ENCODE measurements at regions of chr21 and their contacts with region 1.

Region 1: DNA sequence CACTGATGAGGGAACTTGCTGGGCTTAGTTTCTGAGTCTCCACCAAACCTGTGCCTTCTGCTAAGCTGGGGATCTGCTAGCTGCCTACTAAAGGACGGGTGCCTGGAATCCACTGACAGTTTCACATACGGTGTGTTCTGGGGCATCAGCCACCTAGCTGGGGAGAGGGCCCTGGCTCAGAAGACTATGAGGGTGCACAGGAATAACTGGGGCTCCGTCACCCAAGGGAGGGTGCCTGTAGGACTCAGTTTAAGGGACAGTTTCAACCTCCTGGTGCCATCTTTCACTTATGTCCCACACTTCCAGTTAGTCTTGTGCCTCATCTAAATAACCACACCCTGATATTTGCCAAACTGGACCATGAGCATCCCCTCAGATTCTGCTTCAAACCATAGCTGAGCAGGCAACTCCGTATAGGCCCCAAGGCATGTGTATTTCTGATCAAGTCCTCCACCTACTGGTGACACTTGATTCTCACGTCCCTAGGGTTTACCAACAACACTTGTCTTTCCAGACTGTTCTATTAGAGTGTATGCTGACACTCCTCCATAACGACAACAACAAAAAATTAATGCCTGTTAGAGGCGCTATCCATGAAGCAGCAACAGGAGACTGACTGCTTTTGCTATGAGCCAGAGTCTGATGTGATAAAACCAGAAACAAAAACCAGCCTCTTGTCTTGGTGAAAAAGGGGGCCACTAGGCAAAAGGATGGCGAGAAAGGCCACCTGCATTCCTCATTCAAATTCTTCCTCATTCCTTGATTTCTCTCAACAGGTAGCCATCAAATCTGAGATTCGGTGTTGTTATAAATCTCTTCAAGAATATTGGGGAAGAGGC is 55.0 kb upstream of the PAXBP1 start:
- H3K4me3 Mint-ChIP-seq: no peak overlapping the region
- H3K27ac Mint-ChIP-seq: no peak overlapping the region
- H3K4me1 Mint-ChIP-seq: no peaks in the 10 kb centered on the region
- H3K27me3 Mint-ChIP-seq: peaks cover 3% of the 10 kb centered on the region

Region 2: GRCh38 chr21:32538147-32538792 is 288.3 kb before region 1 on chr21:
- intact Hi-C with region 1: no loop called
- H3K4me3 Mint-ChIP-seq: no peak overlapping the region
- H3K27ac Mint-ChIP-seq: no peak overlapping the region
- H3K4me1 Mint-ChIP-seq: peaks cover 6% of the 10 kb centered on the region
- H3K27me3 Mint-ChIP-seq: no peaks in the 10 kb centered on the region

Region 3: GRCh38 chr21:32653311-32653901 is 173.1 kb before region 1 on chr21:
- intact Hi-C with region 1: loop called (anchors 5 kb)
- H3K4me3 Mint-ChIP-seq: no peak overlapping the region
- H3K27ac Mint-ChIP-seq: no peak overlapping the region
- H3K4me1 Mint-ChIP-seq: no peaks in the 10 kb centered on the region
- H3K27me3 Mint-ChIP-seq: no peaks in the 10 kb centered on the region

Region 4: GRCh38 chr21:32770871-32771523 is 55.6 kb before region 1 on chr21:
- intact Hi-C with region 1: loop called (anchors 5 kb)
- H3K4me3 Mint-ChIP-seq: peak overlapping the region; percentile 85
- H3K27ac Mint-ChIP-seq: peak overlapping the region; percentile 91
- H3K4me1 Mint-ChIP-seq: peaks cover 36% of the 10 kb centered on the region
- H3K27me3 Mint-ChIP-seq: no peaks in the 10 kb centered on the region

Region 5: GRCh38 chr21:32782698-32783097 is 43.9 kb before region 1 on chr21:
- intact Hi-C with region 1: no loop called
- H3K4me3 Mint-ChIP-seq: no peak overlapping the region
- H3K27ac Mint-ChIP-seq: no peak overlapping the region
- H3K4me1 Mint-ChIP-seq: peaks cover 6% of the 10 kb centered on the region
- H3K27me3 Mint-ChIP-seq: no peaks in the 10 kb centered on the region

Region 6: GRCh38 chr21:32861866-32862265 is 35.3 kb after region 1 on chr21:
- intact Hi-C with region 1: no loop called
- H3K4me3 Mint-ChIP-seq: no peak overlapping the region
- H3K27ac Mint-ChIP-seq: no peak overlapping the region
- H3K4me1 Mint-ChIP-seq: no peaks in the 10 kb centered on the region
- H3K27me3 Mint-ChIP-seq: peaks cover 33% of the 10 kb centered on the region

Region 7: DNA sequence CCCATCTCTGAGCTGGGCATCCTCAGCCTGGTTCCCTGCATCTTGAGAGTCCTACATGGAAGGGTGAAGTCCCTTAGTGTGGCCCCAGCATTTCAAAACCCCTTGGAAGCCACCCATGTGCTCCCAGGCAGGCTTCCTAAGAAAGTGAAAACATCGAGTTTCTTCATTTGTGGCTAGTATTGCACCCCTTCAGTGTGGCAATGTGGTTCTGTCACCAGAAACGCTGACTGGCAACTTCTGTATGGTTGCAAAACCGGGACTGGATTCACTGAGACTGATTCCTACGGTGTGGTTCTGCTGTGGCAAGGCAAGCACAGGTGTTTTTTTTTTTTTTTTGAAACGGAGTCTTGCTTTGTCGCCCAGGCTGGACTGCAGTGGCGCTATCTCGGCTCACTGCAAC is 567.7 kb after region 1 on chr21:
- intact Hi-C with region 1: no loop called
- H3K4me3 Mint-ChIP-seq: peak overlapping the region; percentile 50
- H3K27ac Mint-ChIP-seq: peak overlapping the region; percentile 92
- H3K4me1 Mint-ChIP-seq: peaks cover 91% of the 10 kb centered on the region
- H3K27me3 Mint-ChIP-seq: no peaks in the 10 kb centered on the region